CD4-positive, alpha-beta T cell (primary cell): ENCODE measurements at regions of chr7 and their contacts with region 1.

Region 1: DNA sequence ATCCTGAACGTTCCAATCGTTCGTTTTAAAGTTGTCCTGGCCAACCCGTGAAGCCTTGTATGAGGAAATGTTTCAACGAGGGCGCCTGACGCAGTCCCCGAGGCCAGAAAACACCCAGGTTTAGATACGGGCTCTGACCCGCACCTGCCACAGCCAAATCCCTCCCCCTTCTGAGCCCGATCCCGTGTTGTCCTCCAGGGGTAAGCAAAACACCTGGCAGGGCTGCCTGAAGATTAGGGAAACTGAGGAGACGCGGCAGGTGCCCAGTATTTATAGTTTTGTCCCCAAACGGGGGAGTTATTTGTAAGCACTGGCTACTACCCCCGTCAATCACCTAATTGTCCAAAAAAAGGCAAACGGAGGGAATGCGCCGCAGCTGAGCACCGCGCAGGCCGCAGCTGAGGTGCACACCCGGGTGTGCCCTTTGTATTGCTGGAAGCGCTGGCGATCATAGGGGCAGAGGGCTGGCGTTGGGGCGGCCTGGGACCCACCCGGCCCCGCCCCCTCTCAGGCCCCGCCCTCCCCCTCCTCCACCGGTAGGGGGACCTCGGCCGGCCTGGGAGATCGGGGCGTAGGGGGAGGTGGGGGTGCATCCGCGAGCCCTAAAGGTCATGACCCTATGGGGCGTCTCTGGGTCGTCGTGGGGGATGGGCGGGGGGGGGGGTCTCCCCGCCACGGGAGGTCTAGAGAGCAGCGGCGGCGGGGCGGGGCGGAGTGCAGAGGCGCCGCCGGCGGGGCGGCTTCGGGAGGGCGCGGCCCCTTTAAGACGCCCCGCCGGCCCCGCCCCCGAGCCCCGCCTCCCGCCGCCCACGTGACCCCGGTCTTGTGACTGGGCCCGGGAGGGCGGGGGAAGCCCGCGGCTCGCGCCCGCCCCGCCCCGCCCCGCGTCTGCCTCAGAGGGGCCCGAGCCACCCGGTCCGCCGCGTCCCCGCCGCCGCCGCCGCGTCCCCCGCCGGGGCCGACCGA is at the start of gene BRI3:
- DNase-seq: peak; percentile 83 to 98 (median 92)
- ATAC-seq: peak; percentile 77
- H3K4me3 ChIP-seq: peak within 1 kb of the TSS; percentile 77
- H3K4me3 Mint-ChIP-seq: peak within 1 kb of the TSS; percentile 90
- H3K27ac ChIP-seq: peak within 1 kb of the TSS; percentile 62 to 73
- H3K27ac Mint-ChIP-seq: peak within 1 kb of the TSS; percentile 91
- H3K4me1 ChIP-seq: peaks cover 51% of the 10 kb centered on the region
- H3K4me1 Mint-ChIP-seq: peaks cover 37% of the 10 kb centered on the region
- H3K27me3 ChIP-seq: no peaks in the 10 kb centered on the region
- H3K27me3 Mint-ChIP-seq: no peaks in the 10 kb centered on the region
- CTCF ChIP-seq: peak; percentile 53
- total RNA-seq, gene BRI3: 68.0 to 76.5 TPM

Region 2: GRCh38 chr7:97117372-97118188 is 1163.5 kb before region 1 on chr7 and contains the start of gene SDHAF3:
- CTCF ChIA-PET with region 1: no interaction called
- POLR2A ChIA-PET with region 1: no interaction called
- intact Hi-C with region 1: loop called in 1 of 2 experiments (anchors 10 kb)
- DNase-seq: peak; percentile 96 to 99 (median 98)
- ATAC-seq: peak; percentile 93
- H3K4me3 ChIP-seq: peak within 1 kb of the TSS; percentile 82
- H3K4me3 Mint-ChIP-seq: peak within 1 kb of the TSS; percentile 97
- H3K27ac ChIP-seq: peak within 1 kb of the TSS; percentile 57 to 71
- H3K27ac Mint-ChIP-seq: peak within 1 kb of the TSS; percentile 89
- H3K4me1 ChIP-seq: peaks cover 10% of the 10 kb centered on the region
- H3K4me1 Mint-ChIP-seq: peaks cover 57% of the 10 kb centered on the region
- H3K27me3 ChIP-seq: no peaks in the 10 kb centered on the region
- H3K27me3 Mint-ChIP-seq: no peaks in the 10 kb centered on the region
- CTCF ChIP-seq: no peak
- total RNA-seq, gene SDHAF3: 3.2 to 5.0 TPM

Region 3: DNA sequence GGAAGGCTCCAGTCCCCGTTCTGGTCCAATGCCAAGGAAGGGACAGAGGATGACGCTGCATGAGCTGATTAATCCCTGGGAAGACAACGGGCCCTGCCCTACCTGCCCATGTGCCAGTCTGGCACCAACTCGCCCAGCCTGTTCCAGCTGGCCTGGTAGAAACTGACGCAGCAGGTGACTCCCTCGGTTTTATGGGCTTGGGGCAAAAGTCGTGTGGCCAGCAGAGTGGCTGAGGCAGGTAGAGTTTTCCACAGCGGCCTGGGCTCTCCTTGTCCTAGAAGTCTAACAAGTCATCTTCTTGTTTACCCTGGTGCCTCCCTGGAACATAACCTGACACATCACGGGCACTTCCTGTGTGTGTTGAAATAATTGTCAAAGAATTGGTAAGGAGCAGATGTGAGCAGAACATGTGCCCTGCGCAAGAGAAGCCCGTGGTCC is 194.8 kb before region 1 on chr7:
- CTCF ChIA-PET with region 1: no interaction called
- POLR2A ChIA-PET with region 1: no interaction called
- intact Hi-C with region 1: no loop called
- DNase-seq: no peak
- ATAC-seq: no peak
- H3K4me3 ChIP-seq: no peak overlapping the region
- H3K4me3 Mint-ChIP-seq: no peak overlapping the region
- H3K27ac ChIP-seq: no peak overlapping the region
- H3K27ac Mint-ChIP-seq: no peak overlapping the region
- H3K4me1 ChIP-seq: no peaks in the 10 kb centered on the region
- H3K4me1 Mint-ChIP-seq: no peaks in the 10 kb centered on the region
- H3K27me3 ChIP-seq: no peaks in the 10 kb centered on the region
- H3K27me3 Mint-ChIP-seq: peaks cover 9% of the 10 kb centered on the region
- CTCF ChIP-seq: no peak

Region 4: GRCh38 chr7:98211221-98211675 is 69.8 kb before region 1 on chr7 and contains the start of gene BHLHA15:
- CTCF ChIA-PET with region 1: no interaction called
- POLR2A ChIA-PET with region 1: no interaction called
- intact Hi-C with region 1: loop called in 1 of 2 experiments (anchors 5 kb)
- DNase-seq: peak in 7 of 14 experiments; percentile 14 to 58 (median 39)
- ATAC-seq: peak; percentile 29
- H3K4me3 ChIP-seq: peak within 1 kb of the TSS; percentile 26
- H3K4me3 Mint-ChIP-seq: peak within 1 kb of the TSS; percentile 63
- H3K27ac ChIP-seq: no peak within 1 kb of the TSS
- H3K27ac Mint-ChIP-seq: no peak within 1 kb of the TSS
- H3K4me1 ChIP-seq: peaks cover 13% of the 10 kb centered on the region
- H3K4me1 Mint-ChIP-seq: peaks cover 10% of the 10 kb centered on the region
- H3K27me3 ChIP-seq: no peaks in the 10 kb centered on the region
- H3K27me3 Mint-ChIP-seq: no peaks in the 10 kb centered on the region
- CTCF ChIP-seq: no peak
- total RNA-seq, gene BHLHA15: not detected

Region 5: GRCh38 chr7:98400542-98401340 is 119.7 kb after region 1 on chr7 and contains the start of gene BAIAP2L1:
- CTCF ChIA-PET with region 1: no interaction called
- POLR2A ChIA-PET with region 1: interaction called, 3 read pairs
- intact Hi-C with region 1: loop called in 1 of 2 experiments (anchors 5 kb)
- DNase-seq: peak; percentile 63 to 89 (median 80)
- ATAC-seq: peak; percentile 87
- H3K4me3 ChIP-seq: peak within 1 kb of the TSS; percentile 39
- H3K4me3 Mint-ChIP-seq: peak within 1 kb of the TSS; percentile 72
- H3K27ac ChIP-seq: no peak within 1 kb of the TSS
- H3K27ac Mint-ChIP-seq: no peak within 1 kb of the TSS
- H3K4me1 ChIP-seq: peaks cover 12% of the 10 kb centered on the region
- H3K4me1 Mint-ChIP-seq: peaks cover 7% of the 10 kb centered on the region
- H3K27me3 ChIP-seq: peaks cover 0 to 7% of the 10 kb centered on the region in 2 experiments
- H3K27me3 Mint-ChIP-seq: peaks cover 24% of the 10 kb centered on the region
- CTCF ChIP-seq: no peak
- total RNA-seq, gene BAIAP2L1: 0.33 to 0.61 TPM

Region 6: DNA sequence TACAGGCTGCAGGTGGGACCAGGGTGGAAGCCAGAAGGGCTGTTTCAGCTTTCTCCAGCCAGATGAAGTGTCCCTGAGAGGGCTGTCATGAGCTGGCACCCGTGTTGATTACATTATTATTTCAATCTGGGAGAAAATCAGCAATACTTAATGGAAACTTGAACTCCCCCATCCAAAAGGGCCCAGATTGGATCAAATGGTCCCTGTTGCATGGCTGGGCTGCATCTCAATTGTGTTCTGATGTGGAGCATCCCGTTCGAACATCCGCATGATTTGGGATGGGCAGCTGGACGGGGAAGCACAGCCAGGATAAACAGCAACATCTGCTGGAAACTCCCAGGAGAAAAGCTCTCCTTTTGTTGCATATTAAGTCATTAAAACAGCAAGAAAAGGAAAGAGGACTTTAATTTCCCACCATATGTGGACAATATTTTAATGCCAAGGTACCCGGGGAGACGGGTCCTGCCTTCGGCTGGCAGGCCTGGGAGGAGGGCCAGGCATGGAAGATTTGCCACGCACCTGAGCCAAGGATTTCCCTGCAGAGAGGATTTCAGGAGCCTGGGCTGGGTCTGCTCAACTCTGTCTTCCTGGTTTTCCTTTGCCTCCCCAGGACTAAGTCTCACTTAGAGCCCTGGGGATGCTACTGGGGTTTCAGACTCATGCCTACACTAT is 388.4 kb after region 1 on chr7:
- CTCF ChIA-PET with region 1: no interaction called
- POLR2A ChIA-PET with region 1: no interaction called
- intact Hi-C with region 1: no loop called
- DNase-seq: no peak
- ATAC-seq: no peak
- H3K4me3 ChIP-seq: no peak overlapping the region
- H3K4me3 Mint-ChIP-seq: no peak overlapping the region
- H3K27ac ChIP-seq: no peak overlapping the region
- H3K27ac Mint-ChIP-seq: no peak overlapping the region
- H3K4me1 ChIP-seq: no peaks in the 10 kb centered on the region
- H3K4me1 Mint-ChIP-seq: no peaks in the 10 kb centered on the region
- H3K27me3 ChIP-seq: no peaks in the 10 kb centered on the region
- H3K27me3 Mint-ChIP-seq: no peaks in the 10 kb centered on the region
- CTCF ChIP-seq: no peak

Region 7: DNA sequence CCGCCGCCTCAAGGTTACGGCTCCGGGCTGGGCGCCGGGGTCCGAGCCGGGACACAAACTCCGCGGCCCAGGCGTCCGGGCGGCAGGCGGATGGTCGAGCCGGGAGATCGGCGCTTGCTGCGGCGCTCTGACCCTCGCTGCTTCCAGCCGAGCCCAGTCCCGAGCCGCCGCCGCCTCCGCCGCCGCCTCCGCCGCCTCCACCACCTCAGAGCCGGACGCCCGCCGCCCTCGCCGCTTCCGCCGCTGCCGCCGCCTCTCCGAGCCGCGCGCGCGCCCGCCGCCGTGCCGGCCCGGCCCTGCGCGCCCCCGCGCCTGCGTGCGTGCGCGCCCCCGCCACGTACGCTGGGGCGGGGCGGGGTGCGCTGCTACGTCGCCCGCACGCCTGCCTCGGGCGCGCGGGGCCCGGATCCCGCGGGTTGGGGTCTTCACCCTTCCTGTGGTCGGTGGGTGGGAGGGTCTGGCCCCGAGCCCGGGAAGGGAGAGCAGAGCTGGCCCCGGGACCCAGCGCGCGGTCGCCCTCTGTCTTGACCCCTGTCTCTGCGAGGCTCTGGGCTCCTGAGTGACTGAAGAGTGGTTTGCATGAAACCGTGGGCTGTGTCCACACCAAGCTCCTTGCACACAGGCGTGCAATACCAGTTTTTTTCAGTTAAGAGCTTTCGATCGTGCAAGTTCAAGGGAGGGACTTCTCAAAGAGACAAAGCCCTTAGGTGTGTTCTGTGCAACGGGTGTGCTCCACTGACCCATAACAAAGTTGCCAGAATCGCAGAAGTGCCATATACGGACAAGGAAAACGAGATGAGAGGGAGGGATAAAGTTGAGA is 863.0 kb after region 1 on chr7 and contains the start of gene SMURF1:
- CTCF ChIA-PET with region 1: no interaction called
- POLR2A ChIA-PET with region 1: no interaction called
- intact Hi-C with region 1: loop called in 1 of 2 experiments (anchors 10 kb)
- DNase-seq: peak; percentile 52 to 93 (median 70)
- ATAC-seq: peak; percentile 42
- H3K4me3 ChIP-seq: peak within 1 kb of the TSS; percentile 88
- H3K4me3 Mint-ChIP-seq: peak within 1 kb of the TSS; percentile 96
- H3K27ac ChIP-seq: peak within 1 kb of the TSS; percentile 64 to 71
- H3K27ac Mint-ChIP-seq: peak within 1 kb of the TSS; percentile 96
- H3K4me1 ChIP-seq: peaks cover 28% of the 10 kb centered on the region
- H3K4me1 Mint-ChIP-seq: peaks cover 40% of the 10 kb centered on the region
- H3K27me3 ChIP-seq: no peaks in the 10 kb centered on the region
- H3K27me3 Mint-ChIP-seq: no peaks in the 10 kb centered on the region
- CTCF ChIP-seq: no peak
- total RNA-seq, gene SMURF1: 30.0 to 32.4 TPM